ENCODE measurements at regions of chr11 and their contacts with region 1.

Region 1: DNA sequence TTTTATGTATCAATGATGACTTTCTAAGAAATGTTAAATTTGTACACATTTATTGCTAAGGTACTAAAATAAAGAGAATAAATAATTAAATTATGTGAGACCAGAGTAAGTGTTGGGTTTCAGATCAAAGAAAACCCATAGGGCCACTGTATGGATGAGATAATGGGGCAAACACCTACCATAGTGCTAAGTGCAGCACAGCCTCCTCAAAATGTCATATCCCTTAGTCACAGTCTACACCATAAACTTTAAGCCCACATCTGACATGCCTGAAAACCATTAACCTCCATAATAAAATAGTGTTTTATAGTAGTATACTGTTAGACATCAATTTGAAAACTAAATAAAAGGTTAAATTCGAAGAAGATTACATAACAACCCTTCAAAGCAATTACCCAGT is 37.5 kb downstream of the SESN3 start:
- DNase-seq: no peak
- ATAC-seq: no peak
- H3K4me3 ChIP-seq: no peak overlapping the region
- H3K4me3 Mint-ChIP-seq: no peak overlapping the region
- H3K27ac ChIP-seq: no peak overlapping the region
- H3K27ac Mint-ChIP-seq: peak overlapping the region in 1 of 2 donors; percentile 39
- H3K4me1 ChIP-seq: no peaks in the 10 kb centered on the region
- H3K4me1 Mint-ChIP-seq: peaks cover 26 to 55% (median 52%) of the 10 kb centered on the region in 3 donors
- H3K27me3 ChIP-seq: no peaks in the 10 kb centered on the region
- H3K27me3 Mint-ChIP-seq: no peaks in the 10 kb centered on the region

Region 2: DNA sequence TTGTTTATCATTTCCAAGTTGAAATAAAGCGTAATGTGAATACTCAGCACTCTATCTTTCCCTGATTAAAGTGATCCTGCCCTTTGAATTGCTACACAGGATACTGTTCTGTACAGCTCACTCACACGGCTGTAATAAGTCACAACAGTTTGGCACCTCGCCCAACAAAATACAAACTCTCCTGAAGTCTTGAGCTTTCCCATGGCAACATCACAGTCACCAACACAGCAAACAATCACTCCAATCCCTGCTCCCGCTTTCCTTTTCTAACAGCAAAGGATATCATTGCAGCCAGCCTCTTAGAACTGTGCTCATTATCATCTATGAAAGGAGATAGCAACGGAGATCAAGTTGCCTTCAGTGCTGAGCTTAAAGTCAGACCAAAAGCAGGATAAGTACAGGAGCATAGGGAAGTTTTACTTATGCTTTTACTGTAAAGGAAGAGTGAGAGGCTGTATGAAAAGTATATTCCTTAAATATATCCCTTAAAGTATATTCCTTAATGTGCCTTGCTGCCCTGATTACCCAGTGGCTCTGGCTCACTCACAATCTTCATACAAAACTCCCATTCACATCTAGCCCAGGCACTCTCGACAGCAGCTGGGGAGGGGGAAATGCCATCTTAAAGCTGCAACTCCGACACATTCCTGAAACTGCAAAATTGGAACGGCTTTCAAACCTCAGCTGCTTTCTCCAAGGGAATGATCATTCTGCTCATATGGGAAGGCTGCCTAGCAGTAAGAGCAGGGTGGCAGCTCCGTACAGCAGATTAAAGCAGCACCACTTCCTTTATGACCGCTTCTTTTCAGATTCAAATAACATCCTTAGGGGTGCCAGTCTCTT is 1113.6 kb after region 1 on chr11:
- CTCF ChIA-PET with region 1: no interaction called
- POLR2A ChIA-PET with region 1: interaction called in 1 of 2 experiments, 12 read pairs
- DNase-seq: peak in 11 of 35 experiments; percentile 3 to 40 (median 11)
- ATAC-seq: peak; percentile 73 to 87 (median 82)
- H3K4me3 ChIP-seq: peak overlapping the region in 1 of 2 donors; percentile 32
- H3K4me3 Mint-ChIP-seq: peak overlapping the region; percentile 54 to 58 (median 55)
- H3K27ac ChIP-seq: no peak overlapping the region
- H3K27ac Mint-ChIP-seq: peak overlapping the region; percentile 68 to 78
- H3K4me1 ChIP-seq: peaks cover 8 to 16% of the 10 kb centered on the region in 2 experiments
- H3K4me1 Mint-ChIP-seq: peaks cover 80 to 84% (median 80%) of the 10 kb centered on the region in 3 donors
- H3K27me3 ChIP-seq: no peaks in the 10 kb centered on the region
- H3K27me3 Mint-ChIP-seq: no peaks in the 10 kb centered on the region

Measured in T-cell (primary cell).